ENCODE measurements at regions of chr16 and their contacts with region 1.

Region 1: DNA sequence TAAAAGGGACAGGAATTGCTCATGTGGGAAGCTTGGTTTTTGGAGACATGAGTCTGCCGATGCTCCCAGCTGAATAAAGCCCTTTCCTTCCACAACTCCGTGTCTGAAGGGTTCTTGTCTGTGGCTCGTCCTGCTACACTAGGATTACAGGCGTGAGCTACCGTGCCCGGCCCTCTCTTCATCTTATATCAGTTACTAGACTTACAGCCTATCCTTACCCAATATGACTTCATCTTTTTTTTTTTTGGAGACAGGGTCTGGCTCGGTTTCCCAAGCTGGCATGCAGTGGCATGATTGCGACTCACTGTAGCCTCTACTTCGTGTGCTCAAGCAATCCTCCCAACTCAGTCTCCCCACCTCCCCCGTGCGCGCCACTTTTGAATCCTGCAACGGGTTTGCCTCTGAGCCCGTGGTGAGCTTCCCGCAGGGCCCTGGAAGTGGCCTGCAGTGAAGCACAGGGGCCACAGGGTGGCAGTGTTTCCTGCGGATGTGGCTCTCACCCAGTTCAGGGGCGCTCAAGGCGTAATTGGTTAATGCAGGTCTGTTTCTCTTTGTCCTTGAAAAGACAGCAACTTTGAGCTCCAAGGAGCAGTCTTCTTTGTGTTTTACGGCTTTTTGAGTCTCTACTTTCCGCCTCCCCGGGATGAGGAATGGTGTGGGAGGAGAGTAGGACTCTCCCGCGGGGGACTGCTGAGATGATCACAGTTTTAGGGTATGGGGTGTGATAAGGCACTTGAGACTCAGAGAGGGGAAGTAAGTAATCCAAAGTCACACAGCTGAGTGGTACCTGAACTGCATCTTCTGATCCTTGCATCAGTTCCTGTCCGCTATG is 22.7 kb upstream of the GPRC5B start:
- DNase-seq: peak; percentile 79
- H3K4me3 ChIP-seq: peak overlapping the region in 1 of 2 experiments; percentile 46; a peak in 1 of 4 replicates
- H3K27ac ChIP-seq: no peak overlapping the region; a peak in 1 of 4 replicates
- H3K4me1 ChIP-seq: no peaks in the 10 kb centered on the region; a peak in 1 of 4 replicates
- H3K27me3 ChIP-seq: no peaks in the 10 kb centered on the region; the same call in 1 of the 2 replicates
- CTCF ChIP-seq: peak; percentile 96
- EP300 ChIP-seq: no peak
- RAD21 ChIP-seq: peak; percentile 92

Region 2: DNA sequence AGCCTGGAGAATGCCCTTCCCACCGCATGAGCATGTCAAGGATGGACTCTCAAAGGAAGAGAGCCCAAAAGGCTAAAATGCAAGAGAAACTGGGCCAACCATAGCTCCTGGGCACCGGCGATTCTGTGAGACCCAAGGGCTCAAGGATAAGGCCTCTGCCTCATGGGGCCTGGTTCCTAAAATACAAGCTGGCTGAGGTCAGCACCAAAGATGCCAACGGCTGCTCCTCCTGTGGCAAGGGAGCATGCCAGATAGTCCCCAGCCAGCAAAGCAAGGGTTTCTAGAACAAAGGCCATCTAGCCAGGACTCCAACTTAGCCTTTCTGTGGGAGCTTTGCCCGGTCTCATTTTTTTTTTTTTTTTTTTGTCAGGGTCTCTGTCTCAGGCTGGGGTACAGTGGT is 42.8 kb before region 1 on chr16:
- CTCF ChIA-PET with region 1: no interaction called
- POLR2A ChIA-PET with region 1: no interaction called
- DNase-seq: no peak
- H3K4me3 ChIP-seq: no peak overlapping the region
- H3K27ac ChIP-seq: no peak overlapping the region
- H3K4me1 ChIP-seq: no peaks in the 10 kb centered on the region
- H3K27me3 ChIP-seq: no peaks in the 10 kb centered on the region
- CTCF ChIP-seq: no peak
- EP300 ChIP-seq: no peak
- RAD21 ChIP-seq: no peak

Region 3: DNA sequence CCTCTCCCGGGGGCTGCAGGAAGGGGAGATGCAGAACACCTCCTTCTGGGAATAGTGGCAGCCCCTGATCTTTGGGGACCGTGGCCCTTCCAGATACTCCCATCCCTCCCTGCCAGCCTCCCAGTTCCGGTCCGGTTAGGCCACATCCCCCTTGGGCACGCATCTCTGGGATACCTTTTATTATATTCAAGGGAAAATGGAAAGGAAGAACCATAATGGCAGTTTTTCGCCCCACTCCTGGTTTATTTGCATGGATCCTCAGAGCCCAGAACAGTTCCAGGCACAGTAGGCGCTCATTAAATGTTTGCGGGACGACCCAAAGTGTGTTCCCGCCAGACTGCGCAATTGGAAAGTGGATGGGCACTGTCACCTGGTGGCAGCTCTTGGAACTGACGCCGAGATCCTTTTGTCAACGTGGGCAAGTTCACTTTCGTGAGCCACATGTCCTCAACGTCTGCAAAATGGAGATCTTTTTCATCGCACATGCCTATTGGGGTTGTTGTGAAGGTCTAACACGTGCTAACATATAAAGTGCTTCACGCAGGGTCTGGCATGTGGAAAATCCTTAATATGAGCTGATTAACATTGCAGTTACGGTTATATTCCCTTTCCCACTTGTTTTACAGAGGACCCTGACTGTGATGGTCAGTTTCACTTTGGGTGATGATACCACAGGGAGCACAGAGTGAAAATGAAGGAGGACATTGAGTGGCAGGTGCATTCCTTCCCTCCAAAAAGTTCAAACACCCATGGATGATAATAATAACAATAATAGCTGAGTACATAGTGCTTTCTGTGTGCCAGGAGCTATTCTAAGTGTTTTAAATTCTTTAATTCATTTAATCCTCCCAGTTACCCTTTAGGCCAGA is 21.1 kb before region 1 on chr16:
- CTCF ChIA-PET with region 1: interaction called, 15 read pairs
- POLR2A ChIA-PET with region 1: no interaction called
- DNase-seq: peak; percentile 70
- H3K4me3 ChIP-seq: peak overlapping the region in 1 of 2 experiments; percentile 39; a peak in 2 of 4 replicates
- H3K27ac ChIP-seq: no peak overlapping the region
- H3K4me1 ChIP-seq: peaks cover 0 to 3% of the 10 kb centered on the region in 2 experiments; a peak in 1 of 4 replicates
- H3K27me3 ChIP-seq: no peaks in the 10 kb centered on the region
- CTCF ChIP-seq: peak; percentile 99
- EP300 ChIP-seq: no peak
- RAD21 ChIP-seq: peak; percentile 98

Region 4: GRCh38 chr16:19935699-19936098 is 28.3 kb after region 1 on chr16:
- CTCF ChIA-PET with region 1: interaction called, 32 read pairs
- POLR2A ChIA-PET with region 1: no interaction called
- DNase-seq: peak; percentile 49
- H3K4me3 ChIP-seq: no peak overlapping the region
- H3K27ac ChIP-seq: no peak overlapping the region; a peak in 1 of 4 replicates
- H3K4me1 ChIP-seq: peaks cover 0 to 10% of the 10 kb centered on the region in 2 experiments; a peak in 1 of 4 replicates
- H3K27me3 ChIP-seq: no peaks in the 10 kb centered on the region
- CTCF ChIP-seq: no peak
- EP300 ChIP-seq: no peak
- RAD21 ChIP-seq: no peak

Region 5: DNA sequence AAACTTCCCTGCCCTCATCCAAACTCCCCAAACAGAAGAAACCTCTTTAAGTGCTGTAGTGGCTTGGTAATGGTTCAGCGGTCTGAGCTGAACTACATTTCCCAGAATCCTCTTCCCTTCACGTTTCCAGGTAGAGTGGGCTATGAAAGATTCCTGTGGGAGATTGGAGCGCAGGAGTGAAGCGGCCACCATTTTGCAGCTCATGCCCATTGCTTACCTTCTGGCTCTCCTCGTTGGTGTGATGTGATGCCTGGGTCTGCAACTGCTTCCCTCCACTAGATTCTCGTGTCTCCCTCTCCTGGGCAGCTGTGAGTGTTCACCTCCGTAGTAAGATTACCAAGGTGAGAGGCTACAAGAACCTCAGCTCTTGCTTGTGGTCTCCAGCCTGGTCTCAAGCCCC is 84.2 kb after region 1 on chr16:
- CTCF ChIA-PET with region 1: interaction called, 28 read pairs
- POLR2A ChIA-PET with region 1: no interaction called
- DNase-seq: no peak
- H3K4me3 ChIP-seq: no peak overlapping the region
- H3K27ac ChIP-seq: no peak overlapping the region
- H3K4me1 ChIP-seq: peaks cover 0 to 6% of the 10 kb centered on the region in 2 experiments; a peak in 1 of 4 replicates
- H3K27me3 ChIP-seq: no peaks in the 10 kb centered on the region
- CTCF ChIP-seq: no peak
- EP300 ChIP-seq: no peak
- RAD21 ChIP-seq: no peak

Region 6: GRCh38 chr16:20271893-20272292 is 364.5 kb after region 1 on chr16:
- CTCF ChIA-PET with region 1: interaction called, 11 read pairs
- POLR2A ChIA-PET with region 1: no interaction called
- DNase-seq: no peak
- H3K4me3 ChIP-seq: no peak overlapping the region
- H3K27ac ChIP-seq: no peak overlapping the region
- H3K4me1 ChIP-seq: no peaks in the 10 kb centered on the region
- H3K27me3 ChIP-seq: no peaks in the 10 kb centered on the region
- CTCF ChIP-seq: no peak
- EP300 ChIP-seq: no peak
- RAD21 ChIP-seq: no peak

Region 7: GRCh38 chr16:20310421-20311395 is 403.3 kb after region 1 on chr16:
- CTCF ChIA-PET with region 1: interaction called, 47 read pairs
- POLR2A ChIA-PET with region 1: no interaction called
- DNase-seq: no peak
- H3K4me3 ChIP-seq: no peak overlapping the region
- H3K27ac ChIP-seq: no peak overlapping the region
- H3K4me1 ChIP-seq: no peaks in the 10 kb centered on the region
- H3K27me3 ChIP-seq: no peaks in the 10 kb centered on the region
- CTCF ChIP-seq: no peak
- EP300 ChIP-seq: no peak
- RAD21 ChIP-seq: no peak

Region 8: GRCh38 chr16:20383106-20384029 is 476.0 kb after region 1 on chr16:
- CTCF ChIA-PET with region 1: interaction called, 184 read pairs
- POLR2A ChIA-PET with region 1: interaction called, 4 read pairs
- DNase-seq: peak; percentile 65
- H3K4me3 ChIP-seq: no peak overlapping the region; a peak in 1 of 4 replicates
- H3K27ac ChIP-seq: no peak overlapping the region
- H3K4me1 ChIP-seq: no peaks in the 10 kb centered on the region; a peak in 1 of 4 replicates
- H3K27me3 ChIP-seq: no peaks in the 10 kb centered on the region
- CTCF ChIP-seq: peak; percentile 79
- EP300 ChIP-seq: no peak
- RAD21 ChIP-seq: peak; percentile 72